Activated CD4-positive, alpha-beta T cell treated with anti-CD3 and anti-CD28 coated beads for 36 hours (primary cell): ENCODE measurements at regions of chr11 and their contacts with region 1.

Region 1: DNA sequence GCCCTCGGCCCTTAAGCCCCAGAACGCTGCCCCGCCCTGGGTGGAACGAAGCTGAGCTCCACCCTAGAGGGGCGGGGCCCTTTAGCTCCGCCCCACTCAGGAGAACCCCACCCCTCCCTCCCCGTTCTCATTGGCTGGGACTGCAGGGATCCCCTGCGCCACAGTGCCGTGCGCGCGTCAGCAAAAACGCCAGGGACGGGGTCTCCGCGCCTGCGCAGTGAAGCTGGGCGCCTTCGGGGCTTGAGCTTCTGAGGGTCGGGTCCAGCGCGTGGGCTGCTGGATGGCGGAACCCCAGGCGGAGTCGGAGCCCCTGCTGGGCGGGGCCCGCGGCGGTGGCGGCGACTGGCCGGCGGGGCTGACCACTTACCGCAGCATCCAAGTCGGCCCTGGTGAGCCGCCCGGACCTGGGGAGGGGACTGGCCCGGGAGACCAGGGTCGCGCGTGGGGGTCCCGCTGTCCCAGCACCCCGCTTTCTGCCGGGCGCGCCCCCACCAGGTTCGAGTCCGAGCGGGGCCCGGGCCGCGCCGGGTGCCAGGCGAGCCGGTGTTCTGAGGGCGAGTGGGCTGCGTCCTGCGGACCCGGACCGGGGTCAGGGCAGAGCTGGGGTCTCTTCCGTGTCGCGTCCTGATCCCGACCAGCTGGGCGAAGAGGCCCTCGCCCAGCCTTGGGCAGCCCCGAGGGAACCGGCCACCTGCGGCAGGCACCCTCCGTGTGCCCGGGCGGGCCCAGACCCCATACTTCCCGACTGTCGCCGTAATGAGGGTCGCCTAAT is at the start of gene TPCN2:
- DNase-seq: peak; percentile 94
- ATAC-seq: peak; percentile 99
- H3K4me3 Mint-ChIP-seq: peak within 1 kb of the TSS; percentile 72
- H3K27ac Mint-ChIP-seq: peak within 1 kb of the TSS; percentile 73
- H3K4me1 Mint-ChIP-seq: peaks cover 22% of the 10 kb centered on the region
- H3K27me3 Mint-ChIP-seq: peaks cover 2% of the 10 kb centered on the region
- total RNA-seq, gene TPCN2: 7.4 to 10.4 TPM

Region 2: GRCh38 chr11:68459886-68460740 is 588.8 kb before region 1 on chr11:
- CTCF ChIA-PET with region 1: no interaction called
- POLR2A ChIA-PET with region 1: no interaction called
- intact Hi-C with region 1: loop called in 1 of 2 experiments (anchors 1 kb)
- DNase-seq: peak; percentile 97
- ATAC-seq: peak; percentile 93
- H3K4me3 Mint-ChIP-seq: peak overlapping the region; percentile 86
- H3K27ac Mint-ChIP-seq: peak overlapping the region; percentile 89
- H3K4me1 Mint-ChIP-seq: peaks cover 31% of the 10 kb centered on the region
- H3K27me3 Mint-ChIP-seq: no peaks in the 10 kb centered on the region

Region 3: DNA sequence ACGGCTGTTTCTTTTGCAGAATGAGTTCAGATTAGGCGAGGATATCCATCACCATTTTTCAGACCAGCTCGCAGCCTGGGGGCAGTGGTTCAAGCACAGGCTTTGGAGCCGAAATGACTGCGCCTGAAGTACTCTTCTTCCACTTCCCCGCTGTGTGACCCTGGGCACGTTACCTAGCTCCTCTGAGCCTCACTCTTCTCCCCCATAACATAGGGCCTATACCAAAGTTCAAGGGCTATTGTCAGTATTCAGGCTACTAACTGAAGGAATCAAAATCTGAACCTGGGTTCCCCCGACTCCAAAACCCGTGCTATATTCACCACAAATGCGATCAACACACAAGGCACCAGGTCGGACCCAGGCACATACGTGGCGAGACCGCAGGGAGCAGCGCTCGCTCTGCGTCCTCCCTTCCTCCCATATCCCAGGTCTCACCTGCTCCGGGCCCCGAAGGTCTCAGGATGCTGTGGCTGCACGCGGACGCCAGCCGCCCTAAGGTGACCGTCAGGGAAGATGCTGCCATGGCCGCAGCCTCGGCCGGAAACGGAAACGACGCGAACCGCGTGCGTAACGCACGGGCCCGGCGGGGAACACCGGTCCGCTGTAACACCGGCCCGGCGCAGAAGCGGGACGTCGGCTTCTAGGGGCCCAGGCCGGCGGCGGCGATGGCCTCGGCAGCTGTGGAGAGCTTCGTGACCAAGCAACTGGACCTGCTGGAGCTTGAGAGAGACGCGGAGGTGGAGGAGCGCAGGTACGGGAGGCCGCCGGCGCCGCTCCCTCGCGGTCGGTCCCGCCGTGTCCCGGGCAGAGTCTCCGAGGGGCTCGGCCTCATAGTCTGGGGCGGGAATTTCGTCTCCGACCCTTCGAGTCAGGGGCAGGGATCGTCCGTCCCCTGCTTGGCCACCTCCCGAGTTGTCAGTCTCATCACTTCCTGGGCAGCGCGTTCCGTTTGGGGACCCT is 145.3 kb before region 1 on chr11 and contains the starts of genes IGHMBP2 and MRPL21:
- CTCF ChIA-PET with region 1: interaction called, 3 read pairs
- POLR2A ChIA-PET with region 1: no interaction called
- intact Hi-C with region 1: loop called in 1 of 2 experiments (anchors 1 kb)
- DNase-seq: peak; percentile 93
- ATAC-seq: peak; percentile 94
- H3K4me3 Mint-ChIP-seq: peak within 1 kb of the TSS; percentile 93
- H3K27ac Mint-ChIP-seq: peak within 1 kb of the TSS; percentile 91
- H3K4me1 Mint-ChIP-seq: peaks cover 29% of the 10 kb centered on the region
- H3K27me3 Mint-ChIP-seq: no peaks in the 10 kb centered on the region
- total RNA-seq, gene IGHMBP2: 20.9 to 25.4 TPM
- total RNA-seq, gene MRPL21: 100 to 102 TPM

Region 4: GRCh38 chr11:69546735-69547370 is 497.9 kb after region 1 on chr11:
- CTCF ChIA-PET with region 1: no interaction called
- POLR2A ChIA-PET with region 1: no interaction called
- intact Hi-C with region 1: loop called in 1 of 2 experiments (anchors 2 kb)
- DNase-seq: peak; percentile 84
- ATAC-seq: peak; percentile 90
- H3K4me3 Mint-ChIP-seq: no peak overlapping the region
- H3K27ac Mint-ChIP-seq: peak overlapping the region; percentile 40
- H3K4me1 Mint-ChIP-seq: peaks cover 27% of the 10 kb centered on the region
- H3K27me3 Mint-ChIP-seq: peaks cover 45% of the 10 kb centered on the region

Region 5: DNA sequence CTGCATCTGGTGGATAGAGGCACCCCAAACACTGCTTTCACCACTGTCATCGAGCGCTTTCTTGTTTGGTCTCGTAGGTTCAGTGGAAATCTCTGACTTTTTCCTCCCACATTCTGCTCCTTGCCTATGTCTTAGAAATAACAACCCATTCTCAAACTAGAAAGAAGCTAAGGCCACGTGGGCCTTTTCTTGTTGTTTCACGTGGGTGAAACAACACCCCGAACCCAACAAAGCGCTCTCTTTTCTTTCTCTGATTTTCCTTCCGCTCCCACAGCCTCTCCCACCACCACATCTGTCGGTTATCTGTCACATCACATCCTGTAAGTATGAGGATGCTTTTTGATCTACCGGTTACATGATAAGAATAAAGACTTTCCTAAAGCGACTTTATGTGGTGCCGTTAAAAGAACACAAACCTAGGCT is 509.6 kb after region 1 on chr11:
- CTCF ChIA-PET with region 1: no interaction called
- POLR2A ChIA-PET with region 1: no interaction called
- intact Hi-C with region 1: no loop called
- DNase-seq: peak; percentile 31
- ATAC-seq: peak; percentile 72
- H3K4me3 Mint-ChIP-seq: no peak overlapping the region
- H3K27ac Mint-ChIP-seq: no peak overlapping the region
- H3K4me1 Mint-ChIP-seq: peaks cover 24% of the 10 kb centered on the region
- H3K27me3 Mint-ChIP-seq: peaks cover 9% of the 10 kb centered on the region

Region 6: GRCh38 chr11:70202898-70203748 is 1154.2 kb after region 1 on chr11 and contains the start of gene FADD:
- CTCF ChIA-PET with region 1: interaction called, 3 read pairs
- POLR2A ChIA-PET with region 1: no interaction called
- intact Hi-C with region 1: loop called in 1 of 2 experiments (anchors 2 kb)
- DNase-seq: peak; percentile 95
- ATAC-seq: peak; percentile 68
- H3K4me3 Mint-ChIP-seq: peak within 1 kb of the TSS; percentile 97
- H3K27ac Mint-ChIP-seq: peak within 1 kb of the TSS; percentile 99
- H3K4me1 Mint-ChIP-seq: peaks cover 41% of the 10 kb centered on the region
- H3K27me3 Mint-ChIP-seq: peaks cover 2% of the 10 kb centered on the region
- total RNA-seq, gene FADD: 23.5 to 32.4 TPM